ENCODE measurements at regions of chr3 and their contacts with region 1.

Region 1: DNA sequence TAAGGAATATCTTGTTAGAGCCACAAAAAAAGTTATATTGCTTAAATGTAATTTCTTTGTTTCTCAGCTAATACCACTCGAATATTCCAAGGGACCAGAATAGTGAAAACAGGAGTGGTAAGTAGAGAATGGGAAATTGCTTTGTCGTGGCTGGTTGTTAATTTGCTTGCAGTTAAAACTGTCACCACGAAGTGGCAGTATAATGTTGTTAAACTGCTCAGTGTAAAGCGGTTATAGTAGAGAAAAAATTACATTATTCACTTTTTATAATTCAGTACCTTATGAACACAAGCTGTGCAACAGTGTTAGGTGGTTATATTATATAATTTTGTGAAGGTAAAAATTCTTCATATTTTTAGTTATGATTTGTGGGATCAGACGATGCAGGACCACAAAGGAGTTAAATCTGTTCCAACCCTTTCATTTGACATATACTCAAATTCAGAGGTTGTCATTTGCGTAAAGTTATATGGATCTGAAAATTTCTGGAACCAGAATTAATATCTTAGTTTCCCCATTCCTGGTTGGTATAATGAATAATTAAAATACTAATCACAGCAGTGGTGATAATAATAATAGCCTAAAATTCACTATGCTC is 171.8 kb downstream of the FEZF2 start:
- DNase-seq: no peak
- ATAC-seq: peak in 1 of 2 donors; percentile 39
- H3K4me3 ChIP-seq: no peak overlapping the region
- H3K27ac ChIP-seq: no peak overlapping the region
- H3K4me1 ChIP-seq: no peaks in the 10 kb centered on the region
- H3K27me3 ChIP-seq: no peaks in the 10 kb centered on the region

Region 2: DNA sequence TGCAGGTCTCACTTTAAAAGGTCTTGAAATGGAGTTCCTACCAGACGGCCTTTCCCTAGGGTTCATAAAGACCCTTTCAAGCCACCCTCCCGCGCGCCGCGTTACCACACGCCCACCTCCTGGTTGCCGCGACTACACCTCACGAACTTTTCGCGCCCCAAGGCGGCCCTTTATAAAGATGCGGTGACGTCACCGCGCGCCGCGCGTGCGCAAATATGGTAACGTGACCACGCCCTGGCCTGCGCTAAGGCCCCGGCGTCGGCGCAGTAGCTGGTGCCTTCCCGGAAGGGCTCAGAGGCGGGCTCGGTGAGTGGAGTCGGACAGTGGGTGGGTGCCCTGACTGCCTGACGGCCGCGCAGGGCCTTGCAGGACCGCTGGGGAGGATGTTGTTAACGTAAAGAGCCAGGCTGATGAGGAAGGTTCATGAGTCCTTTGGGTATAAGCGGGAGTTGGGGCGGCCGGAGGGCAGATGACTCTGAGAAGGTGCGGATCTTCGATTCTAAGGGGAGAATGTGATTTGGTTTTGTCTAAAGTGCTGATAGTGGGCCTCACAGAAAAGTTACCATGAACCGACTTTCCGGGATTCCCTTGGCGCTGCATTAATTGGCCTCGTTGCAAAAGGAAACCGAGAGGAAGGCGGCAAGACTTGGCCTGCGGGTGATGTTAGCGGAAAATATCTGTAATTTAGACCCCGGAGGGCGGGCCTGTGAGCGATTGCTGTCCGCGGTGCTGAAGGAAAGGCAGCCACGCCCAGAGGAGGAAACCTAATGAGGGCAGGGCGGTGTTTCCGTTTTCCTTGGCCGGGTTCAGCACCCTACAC is 117.4 kb after region 1 on chr3:
- intact Hi-C with region 1: loop called in 1 of 4 experiments (anchors 10 kb)
- DNase-seq: peak; percentile 91 to 97 (median 94)
- ATAC-seq: peak; percentile 99
- H3K4me3 ChIP-seq: peak overlapping the region; percentile 69
- H3K27ac ChIP-seq: peak overlapping the region; percentile 36
- H3K4me1 ChIP-seq: peaks cover 2% of the 10 kb centered on the region
- H3K27me3 ChIP-seq: no peaks in the 10 kb centered on the region

Region 3: DNA sequence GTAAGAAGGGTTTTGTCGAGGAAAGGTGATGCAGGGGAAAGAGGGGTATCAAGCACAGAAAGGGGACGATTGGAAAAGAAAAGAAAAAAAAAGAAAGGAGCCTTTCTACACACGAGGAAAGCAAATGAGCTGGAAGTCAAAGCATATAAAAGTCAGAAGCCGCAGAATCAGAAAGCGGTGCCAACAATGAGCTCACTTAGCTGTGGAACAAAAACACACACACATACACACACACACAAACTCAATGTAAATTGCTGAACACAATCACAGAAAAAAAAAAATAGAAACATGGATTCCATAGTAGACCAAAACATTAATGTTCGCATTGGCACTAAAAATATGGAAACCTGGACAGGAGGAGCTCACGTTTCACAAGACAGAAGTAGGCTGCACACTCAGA is 235.2 kb after region 1 on chr3:
- intact Hi-C with region 1: no loop called
- DNase-seq: no peak
- ATAC-seq: no peak
- H3K4me3 ChIP-seq: no peak overlapping the region
- H3K27ac ChIP-seq: no peak overlapping the region
- H3K4me1 ChIP-seq: no peaks in the 10 kb centered on the region
- H3K27me3 ChIP-seq: no peaks in the 10 kb centered on the region

Region 4: GRCh38 chr3:63069799-63070475 is 868.4 kb after region 1 on chr3:
- intact Hi-C with region 1: no loop called
- DNase-seq: no peak
- ATAC-seq: no peak
- H3K4me3 ChIP-seq: no peak overlapping the region
- H3K27ac ChIP-seq: no peak overlapping the region
- H3K4me1 ChIP-seq: no peaks in the 10 kb centered on the region
- H3K27me3 ChIP-seq: no peaks in the 10 kb centered on the region